Dorsolateral prefrontal cortex (tissue), 120 donors: ENCODE measurements at regions of chr5 and their contacts with region 1.

Region 1: DNA sequence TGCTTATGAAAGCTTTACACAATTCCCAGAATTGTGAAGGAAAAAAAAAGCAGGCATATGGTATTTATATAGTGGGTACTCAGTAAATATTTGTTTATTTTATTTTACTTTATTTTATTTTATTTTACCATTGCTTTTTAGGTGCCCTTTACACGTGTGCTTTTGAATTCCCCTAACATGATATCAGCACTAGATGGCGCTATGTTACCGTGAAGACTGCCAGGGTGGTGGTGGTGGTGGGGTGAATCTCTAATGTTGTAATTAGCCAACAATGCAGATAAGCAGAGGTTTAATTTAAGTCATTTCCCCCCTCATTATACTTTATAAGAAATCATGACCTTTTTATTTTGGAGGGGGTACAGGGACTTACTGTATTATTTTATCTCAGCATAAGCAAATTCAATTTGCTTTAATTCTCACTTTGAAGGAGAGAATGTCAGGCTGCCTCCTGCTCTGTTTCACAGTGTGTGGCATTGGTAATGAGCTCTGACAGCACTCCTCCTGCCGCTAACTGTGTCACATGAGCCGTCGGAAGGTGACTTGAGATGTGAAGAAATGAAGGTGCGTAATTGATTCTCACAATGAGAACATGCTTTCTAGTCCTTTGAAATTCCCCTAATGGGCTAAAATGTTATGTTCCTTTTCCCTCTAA is 165.6 kb downstream of the YTHDC2 start:
- DNase-seq: peak in 5 of 10 donors; percentile 36 to 45 (median 41)
- H3K4me3 ChIP-seq: no peak overlapping the region
- H3K27ac ChIP-seq: no peak overlapping the region
- H3K27me3 ChIP-seq: no peaks in the 10 kb centered on the region
- CTCF ChIP-seq: peak; percentile 46 to 89 (median 76)

Region 2: DNA sequence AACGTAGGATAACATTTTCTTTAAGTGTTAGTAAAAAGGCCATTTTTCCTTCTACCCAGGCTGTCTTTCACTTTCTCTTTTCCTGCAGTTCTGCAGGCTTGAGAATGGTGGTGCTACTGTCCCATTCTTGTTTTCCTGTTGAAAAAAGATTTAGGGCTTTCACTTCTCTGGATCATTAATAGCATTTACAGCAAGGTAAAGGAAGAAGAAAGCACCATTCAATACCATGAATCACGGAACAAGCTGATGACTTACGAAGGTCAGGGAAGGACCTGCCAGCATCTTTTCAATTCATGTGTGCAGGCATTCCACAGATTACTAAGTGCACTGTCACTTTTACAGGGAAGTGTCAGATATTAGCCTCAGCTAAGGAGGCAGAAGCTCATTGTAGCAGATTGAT is 127.2 kb after region 1 on chr5:
- intact Hi-C with region 1: no loop called
- DNase-seq: no peak
- H3K4me3 ChIP-seq: peak overlapping the region in 12 of 59 donors; percentile 2 to 23 (median 16)
- H3K27ac ChIP-seq: peak overlapping the region in 5 of 59 donors; percentile 16 to 71 (median 54)
- H3K27me3 ChIP-seq: peaks cover 0 to 2% (median 0%) of the 10 kb centered on the region in 45 donors
- CTCF ChIP-seq: peak in 47 of 56 donors; percentile 14 to 70 (median 45)

Region 3: GRCh38 chr5:114789773-114790402 is 1110.8 kb after region 1 on chr5:
- intact Hi-C with region 1: loop called in 1 of 2 experiments (anchors 10 kb)
- DNase-seq: no peak
- H3K4me3 ChIP-seq: no peak overlapping the region
- H3K27ac ChIP-seq: no peak overlapping the region
- H3K27me3 ChIP-seq: peaks cover 0 to 3% (median 0%) of the 10 kb centered on the region in 45 donors
- CTCF ChIP-seq: peak in 53 of 56 donors; percentile 16 to 71 (median 46)